Sigmoid colon (tissue), 7 donors: ENCODE measurements at regions of chr7 and their contacts with region 1.

Region 1: DNA sequence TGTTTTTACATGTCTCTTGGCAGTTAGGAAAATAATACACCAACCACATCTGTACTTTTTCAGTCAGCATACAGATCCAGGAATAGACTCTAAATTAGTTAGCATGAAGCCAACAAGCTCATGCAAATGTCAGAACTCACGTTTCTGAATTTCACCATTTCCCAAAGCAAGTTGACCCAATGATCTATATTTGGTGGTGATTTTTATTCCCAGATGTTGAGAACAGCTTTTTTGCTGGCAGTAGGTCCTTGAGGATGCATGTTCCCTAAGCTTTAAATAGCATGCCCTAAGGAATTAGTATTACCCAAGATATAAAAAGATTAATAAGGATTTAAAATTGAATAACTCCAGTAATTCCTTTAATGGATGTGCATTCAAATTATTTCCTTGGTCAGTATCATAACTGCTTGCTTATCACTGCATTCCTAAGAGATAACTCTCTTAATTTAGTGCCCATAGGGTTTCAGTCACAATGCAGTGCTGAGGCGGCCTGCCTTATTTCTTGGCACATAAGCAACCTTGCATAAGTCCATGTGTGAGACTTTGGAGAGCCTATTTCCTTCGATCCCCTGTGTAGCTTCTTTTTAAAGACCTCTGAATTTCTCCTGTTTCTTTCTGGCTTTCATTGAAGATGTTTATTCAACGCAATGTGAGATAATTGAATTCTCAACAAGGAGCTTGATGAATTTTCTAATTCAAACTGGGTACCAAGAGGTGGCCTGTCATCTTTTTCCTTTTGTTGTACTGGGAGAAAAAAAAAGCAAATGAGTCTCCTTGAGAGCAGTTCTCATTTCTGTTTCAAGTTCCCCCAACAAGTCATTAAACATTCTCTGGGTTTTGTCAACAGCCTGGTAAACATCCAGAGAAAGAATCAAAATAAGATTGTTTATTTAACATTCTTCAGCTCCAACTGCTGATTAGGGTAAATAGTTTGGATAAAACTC is 135.3 kb upstream of the MEOX2 start:
- DNase-seq: no peak
- H3K4me3 ChIP-seq: no peak overlapping the region
- H3K27ac ChIP-seq: no peak overlapping the region
- H3K4me1 ChIP-seq: peaks cover 0 to 6% (median 2%) of the 10 kb centered on the region in 4 donors
- H3K27me3 ChIP-seq: no peaks in the 10 kb centered on the region
- CTCF ChIP-seq: no peak
- EP300 ChIP-seq: no peak
- POLR2A ChIP-seq: no peak

Region 2: GRCh38 chr7:15839416-15840100 is 17.8 kb after region 1 on chr7:
- intact Hi-C with region 1: loop called (anchors 1 kb)
- DNase-seq: peak; percentile 78
- H3K4me3 ChIP-seq: peak overlapping the region; percentile 7 to 43 (median 40)
- H3K27ac ChIP-seq: peak overlapping the region; percentile 65 to 74 (median 70)
- H3K4me1 ChIP-seq: peaks cover 0 to 21% (median 15%) of the 10 kb centered on the region in 4 donors
- H3K27me3 ChIP-seq: no peaks in the 10 kb centered on the region
- CTCF ChIP-seq: no peak
- EP300 ChIP-seq: no peak
- POLR2A ChIP-seq: no peak